Calu3 (cell line): ENCODE measurements at regions of chr2 and their contacts with region 1.

Region 1: GRCh38 chr2:138501425-138502283 is at the start of gene SPOPL:
- DNase-seq: peak; percentile 95
- H3K4me3 Mint-ChIP-seq: peak within 1 kb of the TSS; percentile 86
- H3K27ac Mint-ChIP-seq: peak within 1 kb of the TSS; percentile 87
- H3K4me1 Mint-ChIP-seq: peaks cover 22% of the 10 kb centered on the region
- H3K27me3 Mint-ChIP-seq: no peaks in the 10 kb centered on the region
- CTCF ChIP-seq: peak; percentile 35
- total RNA-seq, gene SPOPL: 37.8 and 40.8 TPM in 2 replicates

Region 2: GRCh38 chr2:137928547-137929518 is 572.8 kb before region 1 on chr2:
- CTCF ChIA-PET with region 1: no interaction called
- intact Hi-C with region 1: loop called (anchors 10 kb)
- DNase-seq: no peak
- H3K4me3 Mint-ChIP-seq: no peak overlapping the region
- H3K27ac Mint-ChIP-seq: no peak overlapping the region
- H3K4me1 Mint-ChIP-seq: peaks cover 12% of the 10 kb centered on the region
- H3K27me3 Mint-ChIP-seq: no peaks in the 10 kb centered on the region
- CTCF ChIP-seq: no peak

Region 3: GRCh38 chr2:138042311-138042710 is 459.3 kb before region 1 on chr2:
- CTCF ChIA-PET with region 1: no interaction called
- intact Hi-C with region 1: no loop called
- DNase-seq: no peak
- H3K4me3 Mint-ChIP-seq: no peak overlapping the region
- H3K27ac Mint-ChIP-seq: no peak overlapping the region
- H3K4me1 Mint-ChIP-seq: peaks cover 9% of the 10 kb centered on the region
- H3K27me3 Mint-ChIP-seq: no peaks in the 10 kb centered on the region
- CTCF ChIP-seq: no peak

Region 4: GRCh38 chr2:138107292-138107691 is 394.4 kb before region 1 on chr2:
- CTCF ChIA-PET with region 1: no interaction called
- intact Hi-C with region 1: loop called (anchors 10 kb)
- DNase-seq: no peak
- H3K4me3 Mint-ChIP-seq: peak overlapping the region; percentile 29
- H3K27ac Mint-ChIP-seq: peak overlapping the region; percentile 50
- H3K4me1 Mint-ChIP-seq: peaks cover 53% of the 10 kb centered on the region
- H3K27me3 Mint-ChIP-seq: no peaks in the 10 kb centered on the region
- CTCF ChIP-seq: no peak

Region 5: DNA sequence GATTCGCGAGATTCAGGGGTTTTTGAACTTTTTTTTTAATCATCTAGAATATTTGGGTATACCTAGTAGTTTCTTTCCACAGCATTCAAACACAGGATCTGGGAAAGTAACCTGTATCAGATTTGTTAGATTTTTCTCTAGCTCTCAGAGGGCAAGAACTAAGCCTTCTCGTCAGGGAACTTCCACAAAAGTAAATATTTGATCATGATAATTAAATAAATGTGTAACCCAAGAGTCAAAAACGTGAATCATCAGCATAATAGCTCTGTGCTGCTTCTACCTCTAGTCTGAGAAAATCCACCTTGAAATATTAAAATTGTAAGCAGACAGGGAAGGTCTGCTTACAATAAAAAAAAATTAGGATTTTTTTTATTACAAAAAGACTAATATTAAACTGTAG is 225.8 kb before region 1 on chr2:
- CTCF ChIA-PET with region 1: no interaction called
- intact Hi-C with region 1: loop called (anchors 10 kb)
- DNase-seq: no peak
- H3K4me3 Mint-ChIP-seq: peak overlapping the region; percentile 33
- H3K27ac Mint-ChIP-seq: peak overlapping the region; percentile 63
- H3K4me1 Mint-ChIP-seq: peaks cover 41% of the 10 kb centered on the region
- H3K27me3 Mint-ChIP-seq: no peaks in the 10 kb centered on the region
- CTCF ChIP-seq: no peak

Region 6: GRCh38 chr2:138407099-138407498 is 94.6 kb before region 1 on chr2:
- CTCF ChIA-PET with region 1: no interaction called
- intact Hi-C with region 1: no loop called
- DNase-seq: no peak
- H3K4me3 Mint-ChIP-seq: no peak overlapping the region
- H3K27ac Mint-ChIP-seq: no peak overlapping the region
- H3K4me1 Mint-ChIP-seq: no peaks in the 10 kb centered on the region
- H3K27me3 Mint-ChIP-seq: no peaks in the 10 kb centered on the region
- CTCF ChIP-seq: no peak

Region 7: DNA sequence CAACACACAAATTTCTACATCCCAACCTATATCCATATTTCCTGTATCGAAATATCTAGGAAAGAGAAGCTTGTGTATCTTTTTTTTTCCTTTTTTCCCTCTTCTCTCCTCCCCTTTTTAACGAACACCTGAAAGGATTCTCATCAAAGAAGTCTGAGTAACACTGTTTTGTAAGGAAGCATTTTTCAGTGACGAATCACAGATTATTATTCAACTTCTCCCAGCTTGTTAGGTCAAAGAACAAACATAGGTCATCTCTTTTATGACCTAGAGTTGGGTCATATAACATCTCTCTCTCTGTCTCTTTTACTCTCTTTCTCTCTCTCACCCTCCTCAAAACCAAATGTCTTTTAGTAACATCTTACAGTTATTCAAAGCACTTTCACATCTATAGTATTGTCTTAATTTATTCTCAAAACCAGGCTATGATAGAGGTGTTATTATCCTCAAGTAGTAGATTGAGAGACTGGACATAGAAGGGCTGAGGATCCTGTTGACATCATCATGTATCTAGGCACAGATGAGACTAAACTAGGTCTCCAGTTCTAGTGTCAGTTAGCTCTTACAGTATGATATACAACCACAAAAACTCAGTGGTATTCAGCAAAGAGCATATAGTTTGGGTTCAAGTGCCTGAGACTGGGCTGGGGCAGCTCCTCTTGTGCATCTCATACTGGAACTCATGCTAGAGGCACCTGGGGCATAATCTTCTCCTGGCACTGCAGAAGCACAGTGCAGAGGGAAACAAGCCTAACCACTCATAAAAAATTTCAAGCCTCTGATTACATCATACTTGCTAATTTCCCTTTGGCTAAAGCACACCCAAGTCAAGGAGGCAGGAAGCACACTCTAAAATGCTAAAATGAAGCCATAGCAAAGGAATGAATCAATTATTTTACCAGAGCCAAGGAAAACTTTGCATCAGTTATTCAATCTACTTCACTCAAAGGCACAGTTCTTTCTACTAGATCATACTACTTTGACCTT is 80.0 kb before region 1 on chr2:
- CTCF ChIA-PET with region 1: no interaction called
- intact Hi-C with region 1: loop called (anchors 1 kb)
- DNase-seq: peak; percentile 54
- H3K4me3 Mint-ChIP-seq: peak overlapping the region; percentile 16
- H3K27ac Mint-ChIP-seq: peak overlapping the region; percentile 68
- H3K4me1 Mint-ChIP-seq: peaks cover 78% of the 10 kb centered on the region
- H3K27me3 Mint-ChIP-seq: no peaks in the 10 kb centered on the region
- CTCF ChIP-seq: no peak

Region 8: GRCh38 chr2:138712212-138712979 is 210.7 kb after region 1 on chr2:
- CTCF ChIA-PET with region 1: no interaction called
- intact Hi-C with region 1: loop called (anchors 10 kb)
- DNase-seq: no peak
- H3K4me3 Mint-ChIP-seq: no peak overlapping the region
- H3K27ac Mint-ChIP-seq: no peak overlapping the region
- H3K4me1 Mint-ChIP-seq: peaks cover 51% of the 10 kb centered on the region
- H3K27me3 Mint-ChIP-seq: no peaks in the 10 kb centered on the region
- CTCF ChIP-seq: no peak

Region 9: DNA sequence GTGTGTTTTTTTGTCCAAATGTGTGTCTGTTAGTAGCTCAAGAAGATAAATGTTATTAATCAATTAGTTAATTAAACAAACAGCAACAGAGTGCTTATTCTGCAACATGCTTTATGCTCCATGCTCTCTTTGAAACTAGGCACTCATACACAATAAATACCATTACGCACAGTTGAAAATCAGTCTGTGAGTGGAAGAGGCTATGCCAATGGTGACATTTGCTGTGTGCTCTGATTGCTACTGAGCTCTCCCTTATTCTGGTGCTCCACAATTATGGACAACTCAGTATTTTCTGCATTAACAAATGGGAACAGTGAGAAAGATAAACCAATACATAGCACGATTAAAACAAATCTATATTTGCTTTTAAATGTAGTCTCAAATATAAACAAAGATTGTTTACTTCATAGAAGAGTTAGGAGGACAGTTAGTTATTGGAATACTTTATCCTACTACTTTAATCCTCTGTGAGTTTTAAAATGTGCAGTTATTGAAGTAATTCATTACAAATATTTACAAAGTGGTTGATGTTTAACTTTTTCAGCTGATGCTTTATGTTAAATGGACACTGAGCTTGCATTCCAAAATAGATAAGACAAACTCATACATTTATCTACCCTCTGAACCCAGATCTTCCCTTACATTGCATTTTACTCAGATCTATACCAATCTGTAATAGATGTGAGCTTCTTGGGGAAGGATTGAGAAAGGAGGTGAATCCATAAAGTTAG is 223.2 kb after region 1 on chr2:
- CTCF ChIA-PET with region 1: no interaction called
- intact Hi-C with region 1: no loop called
- DNase-seq: no peak
- H3K4me3 Mint-ChIP-seq: no peak overlapping the region
- H3K27ac Mint-ChIP-seq: no peak overlapping the region
- H3K4me1 Mint-ChIP-seq: peaks cover 21% of the 10 kb centered on the region
- H3K27me3 Mint-ChIP-seq: no peaks in the 10 kb centered on the region
- CTCF ChIP-seq: no peak

Region 10: GRCh38 chr2:138777996-138778395 is 276.3 kb after region 1 on chr2:
- CTCF ChIA-PET with region 1: no interaction called
- intact Hi-C with region 1: loop called (anchors 10 kb)
- DNase-seq: no peak
- H3K4me3 Mint-ChIP-seq: no peak overlapping the region
- H3K27ac Mint-ChIP-seq: no peak overlapping the region
- H3K4me1 Mint-ChIP-seq: peaks cover 20% of the 10 kb centered on the region
- H3K27me3 Mint-ChIP-seq: peaks cover 33% of the 10 kb centered on the region
- CTCF ChIP-seq: no peak

Region 11: GRCh38 chr2:139386401-139386800 is 884.7 kb after region 1 on chr2:
- CTCF ChIA-PET with region 1: no interaction called
- intact Hi-C with region 1: no loop called
- DNase-seq: no peak
- H3K4me3 Mint-ChIP-seq: no peak overlapping the region
- H3K27ac Mint-ChIP-seq: no peak overlapping the region
- H3K4me1 Mint-ChIP-seq: no peaks in the 10 kb centered on the region
- H3K27me3 Mint-ChIP-seq: no peaks in the 10 kb centered on the region
- CTCF ChIP-seq: no peak